ENCODE measurements at regions of chr1 and their contacts with region 1.

Region 1: DNA sequence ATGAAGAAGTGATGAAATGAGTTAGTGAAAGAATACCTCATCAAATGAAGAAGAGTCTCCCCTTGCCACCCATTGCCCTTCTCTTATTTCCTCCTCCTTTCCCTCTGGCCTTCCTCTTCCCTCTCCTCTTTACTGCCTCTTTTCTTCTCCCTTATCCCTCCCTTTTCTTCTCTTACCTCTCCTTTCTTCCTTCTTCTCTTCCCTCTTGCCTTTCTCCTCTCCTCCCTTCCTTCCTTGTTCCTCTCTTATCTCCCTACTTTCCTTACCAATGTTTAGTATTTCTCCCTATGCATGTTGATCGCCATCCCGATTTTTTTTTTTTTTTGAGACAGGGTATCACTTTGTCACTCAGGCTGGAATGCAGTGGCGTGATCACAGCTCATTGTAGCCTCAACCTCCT is 8.8 kb downstream of the MROH7 start:
- DNase-seq: no peak
- ATAC-seq: no peak
- H3K4me3 ChIP-seq: no peak overlapping the region
- H3K27ac ChIP-seq: no peak overlapping the region
- H3K4me1 ChIP-seq: no peaks in the 10 kb centered on the region
- H3K27me3 ChIP-seq: no peaks in the 10 kb centered on the region
- CTCF ChIP-seq: no peak

Region 2: DNA sequence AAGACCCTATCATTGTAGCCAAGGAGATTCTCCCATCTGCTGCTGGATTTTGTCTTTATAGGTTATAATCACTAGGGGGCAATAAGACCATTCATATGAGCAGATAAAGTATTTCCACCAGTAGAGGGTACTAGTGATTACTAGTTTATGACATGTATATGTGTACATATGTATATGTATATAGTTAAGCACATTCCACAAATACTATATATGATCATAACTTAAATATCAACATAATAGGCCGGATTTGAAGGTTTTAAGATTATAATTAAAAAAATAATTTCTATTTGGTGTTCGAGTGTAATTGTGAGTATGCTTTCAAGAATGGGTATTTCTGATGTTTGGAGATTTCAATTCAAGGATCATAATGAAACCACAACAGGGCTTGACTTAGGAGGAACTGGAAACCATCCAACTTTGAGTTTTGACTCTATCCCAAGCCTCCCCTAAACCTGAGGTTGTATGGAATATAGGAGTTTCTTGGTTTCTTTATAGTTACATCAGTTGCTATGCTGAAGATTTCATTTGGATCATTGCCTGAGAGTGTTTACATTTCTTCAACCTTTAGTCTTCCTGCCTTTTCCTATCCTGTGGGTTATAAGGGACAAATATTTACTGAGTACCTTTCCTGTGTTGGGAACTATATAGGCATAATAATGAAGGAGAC is 580.1 kb before region 1 on chr1:
- CTCF ChIA-PET with region 1: interaction called, 10 read pairs
- POLR2A ChIA-PET with region 1: no interaction called
- in situ Hi-C with region 1: no loop called
- intact Hi-C with region 1: no loop called
- DNase-seq: no peak
- ATAC-seq: peak; percentile 96
- H3K4me3 ChIP-seq: no peak overlapping the region
- H3K27ac ChIP-seq: no peak overlapping the region
- H3K4me1 ChIP-seq: no peaks in the 10 kb centered on the region
- H3K27me3 ChIP-seq: no peaks in the 10 kb centered on the region
- CTCF ChIP-seq: peak; percentile 77

Measured in Panc1 (cell line).